ENCODE measurements at regions of chr12 and their contacts with region 1.

Region 1: DNA sequence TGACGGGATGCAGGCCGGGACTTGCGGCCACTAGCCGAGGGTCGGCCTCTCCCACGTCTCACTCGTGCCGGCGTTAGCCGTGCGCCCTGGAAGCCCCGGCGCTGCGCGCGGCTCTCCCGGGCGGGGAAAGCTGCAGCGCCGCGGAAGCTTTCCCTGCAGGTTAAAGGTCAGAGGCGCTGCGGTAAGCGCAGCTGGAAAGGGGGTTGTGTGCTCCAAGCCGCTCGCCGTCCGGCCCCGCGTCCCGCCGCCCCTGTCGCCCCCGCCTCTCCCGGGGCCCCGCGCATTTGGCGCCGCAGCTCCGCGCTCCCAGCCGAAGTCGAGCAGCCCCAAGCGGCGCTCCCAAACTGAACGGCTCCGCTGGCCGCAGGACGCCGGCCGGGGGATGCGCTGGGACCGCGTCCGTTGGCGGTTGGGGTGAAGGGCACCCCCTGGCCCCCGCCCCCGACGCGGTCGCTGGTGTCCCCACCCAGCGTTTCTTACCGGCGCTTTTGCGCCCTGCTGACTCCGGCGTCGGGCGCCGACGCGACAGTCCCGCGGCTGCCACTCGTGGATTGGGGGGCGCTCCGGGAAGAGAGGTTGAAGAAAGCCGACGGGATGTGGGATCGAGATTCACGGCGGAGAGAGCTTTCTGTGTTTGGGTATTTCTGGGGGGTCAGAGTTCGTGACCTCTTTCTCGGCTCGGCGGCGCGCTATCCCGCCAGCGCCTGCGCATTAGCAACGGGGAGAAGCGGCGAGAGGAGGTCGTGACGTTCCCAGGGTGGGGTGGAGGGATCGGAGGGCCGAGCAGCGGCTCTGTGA is at the start of gene NR2C1:
- DNase-seq: peak; percentile 63
- ATAC-seq: peak; percentile 98
- H3K4me3 ChIP-seq: peak within 1 kb of the TSS; percentile 88
- H3K27ac ChIP-seq: peak within 1 kb of the TSS; percentile 72
- H3K4me1 ChIP-seq: 0 out of 2 replicates have a peak, but pooled peaks cover 3% of the 10 kb centered on the region
- H3K27me3 ChIP-seq: no peaks in the 10 kb centered on the region
- CTCF ChIP-seq: no peak; a peak in 1 of 6 replicates
- EP300 ChIP-seq: no peak
- POLR2A ChIP-seq: peak; percentile 61
- RAD21 ChIP-seq: no peak
- polyA plus RNA-seq, gene NR2C1: 8.8 to 19.4 TPM

Region 2: DNA sequence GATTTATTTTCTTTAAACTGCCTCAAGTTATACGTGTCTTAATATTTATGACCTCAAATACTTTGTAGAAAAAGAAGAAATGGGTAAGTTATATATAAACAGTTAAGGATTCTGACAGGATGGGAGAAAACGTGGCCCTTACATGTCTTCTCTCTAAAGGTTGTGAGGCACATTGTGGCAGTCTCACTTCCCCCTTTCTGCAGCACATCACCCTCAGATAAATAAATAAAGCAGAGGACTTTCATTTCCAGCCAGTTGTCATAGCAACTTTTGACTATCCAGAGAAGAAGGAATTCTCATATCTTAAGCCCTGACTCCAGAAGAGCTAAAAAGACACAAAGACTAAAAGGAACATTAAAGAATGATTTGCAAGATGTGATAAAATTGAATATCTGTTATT is 584.6 kb before region 1 on chr12:
- CTCF ChIA-PET with region 1: no interaction called
- POLR2A ChIA-PET with region 1: no interaction called
- RAD21 ChIA-PET with region 1: no interaction called
- SMC1A ChIA-PET with region 1: no interaction called
- in situ Hi-C with region 1: no loop called
- intact Hi-C with region 1: no loop called
- DNase-seq: peak; percentile 56
- ATAC-seq: peak; percentile 100
- H3K4me3 ChIP-seq: no peak overlapping the region
- H3K27ac ChIP-seq: peak overlapping the region; percentile 32; the same call in 1 of the 2 replicates
- H3K4me1 ChIP-seq: peaks cover 13% of the 10 kb centered on the region
- H3K27me3 ChIP-seq: no peaks in the 10 kb centered on the region
- CTCF ChIP-seq: no peak
- EP300 ChIP-seq: peak; percentile 23 to 76; a peak in 3 of 4 replicates
- POLR2A ChIP-seq: no peak
- RAD21 ChIP-seq: no peak

Region 3: DNA sequence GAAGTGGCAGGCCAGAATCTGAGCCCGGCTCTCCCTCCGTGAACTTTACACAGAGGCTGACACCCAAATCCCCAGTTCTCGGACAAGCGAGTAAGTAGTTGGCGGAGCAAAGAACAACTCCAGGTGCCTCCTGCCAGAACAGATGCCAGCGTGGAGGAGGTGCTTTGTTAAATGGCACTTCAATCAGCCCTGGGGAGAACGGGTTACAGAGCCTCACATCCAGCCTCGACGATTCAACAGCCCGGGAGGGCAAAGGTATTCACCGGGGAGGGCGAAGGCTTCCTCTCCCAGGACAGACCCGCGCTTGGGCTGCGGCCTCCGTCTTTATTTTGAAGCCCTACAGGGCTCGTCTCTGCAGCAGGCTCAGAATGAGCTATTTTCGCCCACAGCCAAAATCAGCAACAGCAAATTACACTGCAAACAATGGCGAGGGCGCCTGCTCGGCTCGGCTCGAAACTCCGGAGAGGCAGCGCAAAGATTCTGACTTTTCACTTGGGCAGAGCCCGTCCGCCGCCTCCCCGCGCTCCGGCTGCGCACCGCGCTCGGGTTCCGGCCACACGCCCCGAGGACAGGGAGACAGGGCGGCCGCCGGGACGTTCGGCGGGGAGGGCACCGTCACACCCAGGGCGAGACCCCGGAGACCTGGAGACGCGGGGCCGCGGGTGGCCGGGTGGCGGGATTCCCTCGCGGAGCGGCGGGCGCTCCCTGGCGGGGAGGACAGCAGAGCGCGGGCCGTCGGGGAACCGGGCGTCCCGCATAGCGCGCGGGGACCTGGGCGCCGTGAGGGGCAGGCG is 423.6 kb before region 1 on chr12:
- CTCF ChIA-PET with region 1: no interaction called
- POLR2A ChIA-PET with region 1: no interaction called
- RAD21 ChIA-PET with region 1: no interaction called
- SMC1A ChIA-PET with region 1: no interaction called
- in situ Hi-C with region 1: no loop called
- intact Hi-C with region 1: no loop called
- DNase-seq: no peak
- ATAC-seq: peak; percentile 64
- H3K4me3 ChIP-seq: peak overlapping the region; percentile 68
- H3K27ac ChIP-seq: no peak overlapping the region
- H3K4me1 ChIP-seq: peaks cover 3% of the 10 kb centered on the region
- H3K27me3 ChIP-seq: no peaks in the 10 kb centered on the region
- CTCF ChIP-seq: peak; percentile 30 to 33 (median 32); a peak in 5 of 6 replicates
- EP300 ChIP-seq: no peak
- POLR2A ChIP-seq: no peak
- RAD21 ChIP-seq: peak; percentile 37; the same call in 1 of the 2 replicates

Region 4: GRCh38 chr12:94831081-94831751 is 241.9 kb before region 1 on chr12:
- CTCF ChIA-PET with region 1: no interaction called
- POLR2A ChIA-PET with region 1: no interaction called
- RAD21 ChIA-PET with region 1: no interaction called
- SMC1A ChIA-PET with region 1: no interaction called
- in situ Hi-C with region 1: no loop called
- intact Hi-C with region 1: no loop called
- DNase-seq: peak; percentile 98
- ATAC-seq: peak; percentile 89
- H3K4me3 ChIP-seq: peak overlapping the region; percentile 52
- H3K27ac ChIP-seq: peak overlapping the region; percentile 94
- H3K4me1 ChIP-seq: peaks cover 46% of the 10 kb centered on the region
- H3K27me3 ChIP-seq: no peaks in the 10 kb centered on the region
- CTCF ChIP-seq: no peak
- EP300 ChIP-seq: peak; percentile 92 to 94
- POLR2A ChIP-seq: peak; percentile 68
- RAD21 ChIP-seq: peak; percentile 25; the same call in 1 of the 2 replicates

Region 5: GRCh38 chr12:95088379-95088778 is 15.3 kb after region 1 on chr12:
- CTCF ChIA-PET with region 1: interaction called, 13 read pairs
- POLR2A ChIA-PET with region 1: interaction called, 3 read pairs
- RAD21 ChIA-PET with region 1: no interaction called
- SMC1A ChIA-PET with region 1: interaction called, 4 read pairs
- in situ Hi-C with region 1: no loop called
- intact Hi-C with region 1: no loop called
- DNase-seq: no peak
- ATAC-seq: peak; percentile 71
- H3K4me3 ChIP-seq: 0 out of 2 replicates have a peak overlapping the region, but pooled peaks have one; percentile 16
- H3K27ac ChIP-seq: peak overlapping the region; percentile 37; the same call in 1 of the 2 replicates
- H3K4me1 ChIP-seq: peaks cover 22% of the 10 kb centered on the region
- H3K27me3 ChIP-seq: no peaks in the 10 kb centered on the region
- CTCF ChIP-seq: no peak
- EP300 ChIP-seq: peak; percentile 17 to 39; a peak in 2 of 4 replicates
- POLR2A ChIP-seq: no peak
- RAD21 ChIP-seq: no peak

Region 6: DNA sequence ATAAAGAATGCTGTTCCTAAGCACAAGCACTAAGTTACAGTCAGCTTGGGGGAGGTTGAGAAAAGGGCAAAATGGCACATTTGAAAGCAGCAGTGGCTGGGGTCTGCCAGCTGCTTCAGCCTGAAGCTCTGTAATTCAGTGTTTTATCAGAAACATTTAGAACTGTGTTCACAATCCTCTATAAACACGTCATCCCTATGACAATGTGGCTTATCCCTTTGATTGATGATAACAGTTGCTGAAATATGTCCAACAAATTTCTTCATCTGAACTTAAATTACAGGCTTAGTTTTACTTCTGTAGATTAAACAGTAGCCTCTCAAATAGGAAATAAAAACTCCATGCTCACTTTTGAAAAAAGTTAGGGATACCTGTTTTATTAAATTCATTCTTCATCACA is 253.3 kb after region 1 on chr12:
- CTCF ChIA-PET with region 1: no interaction called
- POLR2A ChIA-PET with region 1: no interaction called
- RAD21 ChIA-PET with region 1: no interaction called
- SMC1A ChIA-PET with region 1: no interaction called
- in situ Hi-C with region 1: no loop called
- intact Hi-C with region 1: no loop called
- DNase-seq: no peak
- ATAC-seq: no peak
- H3K4me3 ChIP-seq: no peak overlapping the region
- H3K27ac ChIP-seq: no peak overlapping the region
- H3K4me1 ChIP-seq: no peaks in the 10 kb centered on the region
- H3K27me3 ChIP-seq: no peaks in the 10 kb centered on the region
- CTCF ChIP-seq: no peak
- EP300 ChIP-seq: no peak
- POLR2A ChIP-seq: no peak
- RAD21 ChIP-seq: no peak